Activated CD4-positive, alpha-beta T cell treated with anti-CD3 and anti-CD28 coated beads for 36 hours (primary cell): ENCODE measurements at regions of chr12 and their contacts with region 1.

Region 1: GRCh38 chr12:121399391-121400331 is at the start of gene RNF34:
- DNase-seq: peak; percentile 99
- ATAC-seq: peak; percentile 91
- H3K4me3 Mint-ChIP-seq: peak within 1 kb of the TSS; percentile 86
- H3K27ac Mint-ChIP-seq: peak within 1 kb of the TSS; percentile 93
- H3K4me1 Mint-ChIP-seq: peaks cover 33% of the 10 kb centered on the region
- H3K27me3 Mint-ChIP-seq: no peaks in the 10 kb centered on the region
- total RNA-seq, gene RNF34: 64.2 to 75.7 TPM

Region 2: DNA sequence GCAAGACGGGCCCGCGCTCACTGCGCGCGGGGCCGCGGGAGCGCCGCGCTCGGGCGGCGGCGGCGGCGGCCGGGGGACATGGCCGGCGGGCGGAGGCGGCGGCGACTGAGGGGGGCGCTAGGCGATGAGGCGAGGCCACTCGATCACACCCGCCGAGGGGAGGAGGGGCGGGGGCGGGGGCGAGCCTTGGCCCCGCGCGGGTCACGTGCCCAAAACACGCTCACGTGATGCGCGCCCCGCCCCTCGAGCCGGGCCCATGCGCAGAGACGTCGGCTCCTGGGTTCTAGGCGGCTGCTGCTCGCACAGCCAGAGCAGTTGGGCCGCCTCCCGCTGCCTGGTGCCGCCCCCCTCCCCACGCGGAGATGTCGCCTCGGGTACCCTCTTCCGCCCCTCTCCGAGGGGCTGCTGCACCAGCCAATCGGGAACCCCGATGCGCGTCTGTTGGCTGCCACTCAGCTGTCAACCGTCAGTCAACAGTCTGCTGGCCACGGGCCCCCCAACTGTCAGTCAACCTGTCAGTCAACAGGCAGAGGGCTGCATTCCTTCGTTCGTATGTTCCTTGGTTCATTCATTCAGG is 495.4 kb before region 1 on chr12 and contains the start of gene SPPL3:
- CTCF ChIA-PET with region 1: no interaction called
- POLR2A ChIA-PET with region 1: no interaction called
- intact Hi-C with region 1: loop called in 1 of 2 experiments (anchors 2 kb)
- DNase-seq: peak; percentile 96
- ATAC-seq: peak; percentile 81
- H3K4me3 Mint-ChIP-seq: peak within 1 kb of the TSS; percentile 92
- H3K27ac Mint-ChIP-seq: peak within 1 kb of the TSS; percentile 95
- H3K4me1 Mint-ChIP-seq: peaks cover 28% of the 10 kb centered on the region
- H3K27me3 Mint-ChIP-seq: no peaks in the 10 kb centered on the region
- total RNA-seq, gene SPPL3: 29.5 to 48.2 TPM

Region 3: GRCh38 chr12:121209624-121210572 is 189.8 kb before region 1 on chr12 and contains the start of gene P2RX4:
- CTCF ChIA-PET with region 1: no interaction called
- POLR2A ChIA-PET with region 1: no interaction called
- intact Hi-C with region 1: loop called in 1 of 2 experiments (anchors 2 kb)
- DNase-seq: peak; percentile 93
- ATAC-seq: peak; percentile 79
- H3K4me3 Mint-ChIP-seq: peak within 1 kb of the TSS; percentile 79
- H3K27ac Mint-ChIP-seq: peak within 1 kb of the TSS; percentile 89
- H3K4me1 Mint-ChIP-seq: peaks cover 31% of the 10 kb centered on the region
- H3K27me3 Mint-ChIP-seq: no peaks in the 10 kb centered on the region
- total RNA-seq, gene P2RX4: 21.2 to 21.6 TPM

Region 4: GRCh38 chr12:121351820-121352681 is 47.6 kb before region 1 on chr12 and contains the start of gene ANAPC5:
- CTCF ChIA-PET with region 1: interaction called, 10 read pairs
- POLR2A ChIA-PET with region 1: interaction called, 27 read pairs
- intact Hi-C with region 1: loop called (anchors 1 kb)
- DNase-seq: peak; percentile 94
- ATAC-seq: peak; percentile 99
- H3K4me3 Mint-ChIP-seq: peak within 1 kb of the TSS; percentile 92
- H3K27ac Mint-ChIP-seq: peak within 1 kb of the TSS; percentile 97
- H3K4me1 Mint-ChIP-seq: peaks cover 24% of the 10 kb centered on the region
- H3K27me3 Mint-ChIP-seq: peaks cover under 1% of the 10 kb centered on the region
- total RNA-seq, gene ANAPC5: 113 to 118 TPM

Region 5: DNA sequence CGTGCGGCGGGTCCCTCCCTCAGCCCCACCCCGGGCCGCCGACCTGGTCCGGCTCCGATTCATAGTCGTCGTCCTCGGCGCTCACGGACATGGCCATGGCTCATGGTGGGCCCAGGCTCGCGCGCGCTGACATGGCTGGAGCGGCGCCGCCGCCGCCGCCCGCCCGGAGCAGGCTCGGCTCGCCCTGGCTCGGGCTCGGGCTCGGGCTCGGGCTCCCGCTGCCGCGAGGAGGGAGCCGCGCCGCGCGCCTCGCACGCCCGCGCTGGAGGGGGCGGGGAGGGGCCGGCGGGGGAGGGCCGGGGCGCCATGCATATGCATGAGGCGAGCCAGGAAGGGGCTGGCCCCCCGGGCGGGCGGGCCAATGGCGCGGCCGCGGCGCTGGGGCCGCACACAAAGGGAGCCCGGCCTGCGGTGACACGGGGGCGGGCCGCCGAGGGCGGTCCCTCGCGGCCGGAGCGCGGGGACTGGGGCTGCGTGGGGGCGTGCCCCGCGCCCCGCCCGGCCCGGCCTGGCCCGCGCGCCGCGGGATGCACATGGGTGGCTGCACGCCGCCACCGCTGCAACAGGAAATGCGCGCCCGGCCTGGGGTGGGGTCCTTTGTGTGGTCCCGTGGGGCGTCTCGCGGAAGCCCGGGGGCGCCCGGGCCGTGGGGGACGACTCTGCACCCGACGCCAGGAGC is 67.6 kb after region 1 on chr12:
- CTCF ChIA-PET with region 1: no interaction called
- POLR2A ChIA-PET with region 1: interaction called, 3 read pairs
- intact Hi-C with region 1: loop called in 1 of 2 experiments (anchors 1 kb)
- DNase-seq: peak; percentile 93
- ATAC-seq: peak; percentile 94
- H3K4me3 Mint-ChIP-seq: peak overlapping the region; percentile 57
- H3K27ac Mint-ChIP-seq: no peak overlapping the region
- H3K4me1 Mint-ChIP-seq: peaks cover 20% of the 10 kb centered on the region
- H3K27me3 Mint-ChIP-seq: no peaks in the 10 kb centered on the region

Region 6: DNA sequence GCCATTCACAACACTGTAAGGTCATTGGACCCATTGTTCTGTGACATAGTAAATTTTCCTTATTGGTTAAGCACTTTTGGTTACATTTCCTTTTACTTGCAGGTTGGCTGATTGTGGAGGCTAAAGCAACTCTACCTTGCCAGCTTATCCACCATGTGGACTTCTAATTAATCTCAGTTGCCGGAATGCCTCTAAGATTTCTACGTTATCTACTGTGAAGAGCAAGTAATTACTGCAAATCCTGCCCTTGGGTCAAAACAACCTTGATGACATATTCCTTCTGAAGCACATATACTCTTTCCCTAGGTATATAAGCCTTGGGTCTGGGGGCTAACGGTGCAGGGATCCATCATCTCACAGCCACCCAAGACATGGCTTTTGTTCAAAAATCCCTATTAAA is 289.3 kb after region 1 on chr12:
- CTCF ChIA-PET with region 1: no interaction called
- POLR2A ChIA-PET with region 1: no interaction called
- intact Hi-C with region 1: loop called in 1 of 2 experiments (anchors 1 kb)
- DNase-seq: no peak
- ATAC-seq: no peak
- H3K4me3 Mint-ChIP-seq: no peak overlapping the region
- H3K27ac Mint-ChIP-seq: no peak overlapping the region
- H3K4me1 Mint-ChIP-seq: peaks cover 7% of the 10 kb centered on the region
- H3K27me3 Mint-ChIP-seq: no peaks in the 10 kb centered on the region

Region 7: DNA sequence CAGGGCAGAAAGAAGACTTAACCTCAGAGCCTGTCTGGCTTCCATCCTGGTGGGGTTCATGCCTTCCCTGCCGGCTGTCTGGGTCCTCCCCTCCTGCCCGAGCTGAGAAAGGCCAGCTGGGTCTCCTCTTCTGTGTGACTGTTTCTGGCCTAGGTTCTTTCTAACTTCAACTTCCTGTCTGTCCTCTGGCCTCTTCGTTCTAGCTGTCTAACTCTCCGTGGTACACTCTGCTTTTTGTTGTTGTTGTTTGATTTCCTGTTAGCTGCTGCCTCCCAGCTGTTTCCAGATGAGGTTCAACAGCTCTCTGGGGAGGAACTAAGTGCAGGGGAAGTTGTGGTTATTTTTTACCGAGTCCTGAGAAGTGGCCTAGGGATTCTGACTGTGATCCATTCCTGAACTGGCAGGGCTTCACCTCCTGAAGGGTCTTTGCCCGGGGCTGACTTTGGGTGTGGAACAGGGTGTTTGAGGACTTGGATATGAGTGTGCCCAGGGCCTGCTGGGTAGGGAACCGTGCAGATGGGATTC is 682.1 kb after region 1 on chr12:
- CTCF ChIA-PET with region 1: no interaction called
- POLR2A ChIA-PET with region 1: no interaction called
- intact Hi-C with region 1: no loop called
- DNase-seq: no peak
- ATAC-seq: peak; percentile 17
- H3K4me3 Mint-ChIP-seq: peak overlapping the region; percentile 76
- H3K27ac Mint-ChIP-seq: peak overlapping the region; percentile 82
- H3K4me1 Mint-ChIP-seq: peaks cover 74% of the 10 kb centered on the region
- H3K27me3 Mint-ChIP-seq: no peaks in the 10 kb centered on the region